WTC11 (cell line): ENCODE measurements at regions of chr6 and their contacts with region 1.

Region 1: GRCh38 chr6:35415065-35415991 is 36.8 kb upstream of the FANCE start:
- DNase-seq: peak; percentile 64
- ATAC-seq: peak; percentile 84
- H3K4me3 Mint-ChIP-seq: no peak overlapping the region
- H3K27ac Mint-ChIP-seq: peak overlapping the region; percentile 0; the same call in 1 of the 2 replicates
- H3K4me1 Mint-ChIP-seq: peaks cover 24% of the 10 kb centered on the region
- H3K27me3 Mint-ChIP-seq: no peaks in the 10 kb centered on the region
- CTCF ChIP-seq: no peak

Region 2: GRCh38 chr6:35297601-35298481 is 117.5 kb before region 1 on chr6 and contains the start of gene DEF6:
- CTCF ChIA-PET with region 1: interaction called, 16 read pairs
- POLR2A ChIA-PET with region 1: no interaction called
- DNase-seq: peak; percentile 90
- ATAC-seq: peak; percentile 94
- H3K4me3 Mint-ChIP-seq: peak within 1 kb of the TSS; percentile 46
- H3K27ac Mint-ChIP-seq: 0 out of 2 replicates have a peak within 1 kb of the TSS, but pooled peaks have one; percentile 41
- H3K4me1 Mint-ChIP-seq: peaks cover 35% of the 10 kb centered on the region
- H3K27me3 Mint-ChIP-seq: 0 out of 2 replicates have a peak, but pooled peaks cover 4% of the 10 kb centered on the region
- CTCF ChIP-seq: no peak; the same call in 1 of the 2 replicates
- total RNA-seq, gene DEF6: 11.3 to 12.8 TPM (median 11.4 TPM) in 3 replicates

Region 3: GRCh38 chr6:35359751-35360348 is 55.5 kb before region 1 on chr6:
- CTCF ChIA-PET with region 1: interaction called, 11 read pairs
- POLR2A ChIA-PET with region 1: no interaction called
- DNase-seq: no peak
- ATAC-seq: no peak; the same call in 1 of the 2 replicates
- H3K4me3 Mint-ChIP-seq: 0 out of 2 replicates have a peak overlapping the region, but pooled peaks have one; percentile 17
- H3K27ac Mint-ChIP-seq: peak overlapping the region; percentile 64
- H3K4me1 Mint-ChIP-seq: peaks cover 36% of the 10 kb centered on the region
- H3K27me3 Mint-ChIP-seq: no peaks in the 10 kb centered on the region
- CTCF ChIP-seq: no peak

Region 4: GRCh38 chr6:35402136-35402855 is 13.0 kb before region 1 on chr6:
- CTCF ChIA-PET with region 1: interaction called, 17 read pairs
- POLR2A ChIA-PET with region 1: no interaction called
- DNase-seq: no peak
- ATAC-seq: no peak
- H3K4me3 Mint-ChIP-seq: no peak overlapping the region
- H3K27ac Mint-ChIP-seq: no peak overlapping the region
- H3K4me1 Mint-ChIP-seq: peaks cover 12% of the 10 kb centered on the region
- H3K27me3 Mint-ChIP-seq: no peaks in the 10 kb centered on the region
- CTCF ChIP-seq: no peak

Region 5: DNA sequence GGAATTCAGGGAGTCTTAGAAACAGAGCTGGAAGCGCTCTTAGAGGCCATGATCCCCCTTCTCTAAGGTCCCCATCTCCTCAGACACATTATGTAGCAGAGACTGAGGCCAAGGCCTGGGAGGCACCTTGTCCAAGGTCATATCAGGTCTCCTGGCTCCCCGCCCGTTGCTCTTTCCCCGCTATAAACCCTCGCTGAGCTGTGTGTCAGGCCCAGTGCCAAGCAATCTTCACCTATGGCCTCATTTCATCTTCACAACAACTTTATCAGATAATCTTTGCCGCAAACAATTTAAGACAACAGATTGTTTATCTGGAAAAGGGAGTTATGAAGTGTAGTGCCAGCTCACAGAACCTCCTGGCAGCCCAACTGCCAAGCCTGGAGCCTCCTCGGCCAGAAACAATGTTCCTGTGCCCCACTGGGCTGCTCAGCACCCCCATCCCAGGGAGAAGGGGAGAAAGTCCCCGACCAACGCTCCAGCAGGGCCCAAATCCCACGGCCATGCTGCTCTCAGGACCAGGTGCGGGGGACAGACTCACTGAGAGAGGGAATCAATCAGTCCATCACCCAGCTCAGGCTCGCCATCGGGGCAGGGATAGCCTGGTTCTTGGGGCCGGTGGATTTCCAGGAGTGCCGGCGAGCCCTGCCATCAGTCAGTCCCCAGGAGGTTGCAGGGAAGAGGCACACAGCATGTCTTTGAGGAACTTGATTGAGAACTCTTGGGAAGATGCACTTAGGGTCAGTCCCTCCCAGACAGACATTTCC is 19.9 kb after region 1 on chr6:
- CTCF ChIA-PET with region 1: interaction called, 17 read pairs
- POLR2A ChIA-PET with region 1: no interaction called
- DNase-seq: no peak
- ATAC-seq: no peak
- H3K4me3 Mint-ChIP-seq: no peak overlapping the region
- H3K27ac Mint-ChIP-seq: no peak overlapping the region; the same call in 1 of the 2 replicates
- H3K4me1 Mint-ChIP-seq: peaks cover 3% of the 10 kb centered on the region; the same call in 1 of the 2 replicates
- H3K27me3 Mint-ChIP-seq: no peaks in the 10 kb centered on the region
- CTCF ChIP-seq: no peak

Region 6: DNA sequence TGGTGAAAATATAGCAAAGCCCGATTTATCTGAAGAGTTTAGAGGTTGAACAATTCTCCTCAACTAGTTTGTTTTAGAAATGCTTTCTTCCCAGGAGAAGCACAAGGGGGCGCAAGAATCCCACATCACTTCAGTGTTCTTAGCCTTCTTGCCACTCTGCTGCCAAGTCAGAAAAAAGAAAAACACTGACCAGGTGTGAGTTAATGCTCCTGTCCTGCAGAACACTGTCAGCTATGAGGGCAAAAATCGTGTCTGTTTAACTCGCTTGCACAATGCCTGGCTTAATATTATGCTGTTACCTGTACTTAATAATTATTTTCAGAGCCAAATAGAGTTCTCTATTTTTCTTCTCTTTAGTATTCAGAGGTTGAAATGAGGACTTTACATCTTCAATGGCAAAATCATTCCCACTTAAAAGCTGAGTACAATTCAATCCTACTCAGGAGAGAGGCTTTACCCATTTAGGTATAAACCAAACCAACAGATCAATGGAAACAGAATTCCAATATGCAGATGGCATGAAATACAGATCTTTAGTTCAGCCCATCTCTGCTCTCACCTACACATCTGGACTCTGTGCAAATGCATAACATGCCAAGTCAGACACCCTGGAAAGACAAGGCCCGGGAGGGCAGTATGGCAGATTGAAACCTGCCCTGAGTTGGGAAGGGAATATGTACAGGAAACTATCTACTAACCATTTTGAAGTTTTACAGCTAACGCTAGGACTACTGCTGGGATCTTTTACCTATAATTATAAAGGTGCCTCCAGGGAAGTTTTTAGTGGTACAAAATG is 168.8 kb after region 1 on chr6:
- CTCF ChIA-PET with region 1: no interaction called
- POLR2A ChIA-PET with region 1: interaction called, 11 read pairs
- DNase-seq: peak; percentile 75
- ATAC-seq: peak; percentile 86
- H3K4me3 Mint-ChIP-seq: no peak overlapping the region
- H3K27ac Mint-ChIP-seq: no peak overlapping the region
- H3K4me1 Mint-ChIP-seq: peaks cover 4% of the 10 kb centered on the region; the same call in 1 of the 2 replicates
- H3K27me3 Mint-ChIP-seq: no peaks in the 10 kb centered on the region
- CTCF ChIP-seq: peak; percentile 73